H1 (cell line): ENCODE measurements at regions of chr1 and their contacts with region 1.

Region 1: GRCh38 chr1:200971955-200972711 is 51.4 kb downstream of the KIF21B start:
- DNase-seq: peak; percentile 27 to 90
- H3K4me3 ChIP-seq: no peak overlapping the region
- H3K27ac ChIP-seq: no peak overlapping the region
- H3K4me1 ChIP-seq: peaks cover 0 to 3% (median 0%) of the 10 kb centered on the region in 4 experiments; a peak in 1 of 7 replicates
- H3K27me3 ChIP-seq: no peaks in the 10 kb centered on the region
- CTCF ChIP-seq: peak; percentile 61 to 80 (median 68)
- EP300 ChIP-seq: no peak
- POLR2A ChIP-seq: no peak
- RAD21 ChIP-seq: peak; percentile 75 to 82

Region 2: DNA sequence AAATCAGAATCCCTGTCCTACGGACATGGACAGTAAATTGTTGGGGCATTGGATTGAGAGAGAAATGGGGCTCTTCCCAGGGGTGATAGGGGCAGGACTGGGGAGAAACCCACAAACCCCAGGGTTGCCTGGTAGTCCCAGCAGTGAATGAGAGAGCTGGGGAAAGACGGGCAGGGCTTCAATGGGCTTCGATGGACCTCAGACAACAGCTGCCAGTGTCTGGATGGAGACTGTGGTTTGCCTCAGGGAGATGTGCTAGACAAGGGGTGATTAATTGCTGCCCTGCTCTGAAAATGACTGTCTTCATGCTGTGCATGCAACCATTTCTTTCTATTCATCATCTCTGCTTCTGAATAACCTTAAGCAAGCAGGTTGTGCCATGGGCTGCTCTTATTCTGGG is 91.9 kb before region 1 on chr1:
- CTCF ChIA-PET with region 1: no interaction called
- POLR2A ChIA-PET with region 1: no interaction called
- DNase-seq: peak in 1 of 2 experiments; percentile 37
- H3K4me3 ChIP-seq: no peak overlapping the region
- H3K27ac ChIP-seq: no peak overlapping the region
- H3K4me1 ChIP-seq: peaks cover 0 to 6% (median 5%) of the 10 kb centered on the region in 4 experiments; a peak in 4 of 7 replicates
- H3K27me3 ChIP-seq: no peaks in the 10 kb centered on the region
- CTCF ChIP-seq: no peak
- EP300 ChIP-seq: no peak
- POLR2A ChIP-seq: no peak
- RAD21 ChIP-seq: no peak

Region 3: DNA sequence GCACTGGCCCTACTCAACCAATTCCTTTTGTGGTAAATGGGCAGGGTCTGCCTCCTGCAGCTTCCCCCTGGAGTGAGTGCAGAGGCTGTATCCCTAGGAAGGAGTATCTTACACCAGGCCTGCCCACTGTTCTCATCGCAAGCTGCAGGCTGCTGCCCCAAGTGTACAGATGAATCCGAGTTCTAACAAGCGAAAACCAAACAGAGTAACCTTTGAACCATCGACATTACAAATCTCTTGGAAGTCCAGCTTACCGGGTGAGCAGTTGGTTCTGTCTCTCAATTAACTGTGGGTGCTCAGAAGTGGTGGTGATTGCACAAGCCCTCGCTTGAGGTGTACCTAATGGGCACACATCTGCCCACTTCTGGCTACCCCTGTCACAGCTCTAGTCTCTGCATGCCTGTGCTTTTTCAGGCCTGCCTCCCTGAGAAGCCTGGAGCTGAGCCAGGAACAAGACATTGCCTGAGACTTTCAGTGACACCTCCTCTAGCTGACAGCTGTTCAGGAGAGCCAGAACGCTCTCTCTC is 54.8 kb before region 1 on chr1:
- CTCF ChIA-PET with region 1: interaction called, 14 read pairs
- POLR2A ChIA-PET with region 1: interaction called, 3 read pairs
- DNase-seq: no peak
- H3K4me3 ChIP-seq: no peak overlapping the region
- H3K27ac ChIP-seq: no peak overlapping the region
- H3K4me1 ChIP-seq: peaks cover 0 to 7% (median 5%) of the 10 kb centered on the region in 4 experiments; a peak in 3 of 7 replicates
- H3K27me3 ChIP-seq: no peaks in the 10 kb centered on the region
- CTCF ChIP-seq: no peak
- EP300 ChIP-seq: no peak
- POLR2A ChIP-seq: no peak
- RAD21 ChIP-seq: no peak

Region 4: DNA sequence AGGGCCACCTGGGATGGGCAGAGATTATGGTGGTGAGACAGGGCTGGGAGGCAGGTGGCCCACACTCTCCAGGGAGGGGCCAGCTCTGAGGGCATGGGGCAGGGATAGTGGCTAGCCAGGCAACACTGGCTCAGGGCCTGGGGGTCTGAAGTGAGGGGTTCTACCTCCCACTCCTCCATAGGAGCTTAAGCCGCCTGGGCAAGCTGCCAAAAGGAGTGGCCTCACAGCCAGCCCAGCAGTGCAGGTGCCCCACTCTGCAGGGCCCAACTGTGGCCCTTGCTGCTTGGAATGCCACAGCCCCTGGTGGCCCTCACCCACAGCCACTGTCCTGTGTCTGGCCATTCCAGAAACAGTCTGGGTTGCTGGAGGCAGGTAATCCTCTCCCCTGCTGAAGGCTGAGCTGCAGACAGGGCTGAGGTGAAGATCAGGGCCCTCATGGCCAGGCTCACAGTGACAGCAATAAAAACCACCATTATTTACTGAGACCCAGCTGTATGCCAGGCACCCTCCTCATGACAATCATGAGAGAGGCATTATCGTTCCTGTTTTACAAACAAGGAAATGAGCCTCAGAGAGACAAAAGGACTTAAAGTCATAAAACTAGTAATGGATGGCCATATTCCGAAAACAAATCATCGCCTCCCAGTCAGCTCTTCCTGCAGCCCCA is 20.4 kb after region 1 on chr1:
- CTCF ChIA-PET with region 1: interaction called, 146 read pairs
- POLR2A ChIA-PET with region 1: no interaction called
- DNase-seq: no peak
- H3K4me3 ChIP-seq: no peak overlapping the region
- H3K27ac ChIP-seq: no peak overlapping the region
- H3K4me1 ChIP-seq: no peaks in the 10 kb centered on the region
- H3K27me3 ChIP-seq: no peaks in the 10 kb centered on the region
- CTCF ChIP-seq: no peak
- EP300 ChIP-seq: no peak
- POLR2A ChIP-seq: no peak
- RAD21 ChIP-seq: no peak

Region 5: DNA sequence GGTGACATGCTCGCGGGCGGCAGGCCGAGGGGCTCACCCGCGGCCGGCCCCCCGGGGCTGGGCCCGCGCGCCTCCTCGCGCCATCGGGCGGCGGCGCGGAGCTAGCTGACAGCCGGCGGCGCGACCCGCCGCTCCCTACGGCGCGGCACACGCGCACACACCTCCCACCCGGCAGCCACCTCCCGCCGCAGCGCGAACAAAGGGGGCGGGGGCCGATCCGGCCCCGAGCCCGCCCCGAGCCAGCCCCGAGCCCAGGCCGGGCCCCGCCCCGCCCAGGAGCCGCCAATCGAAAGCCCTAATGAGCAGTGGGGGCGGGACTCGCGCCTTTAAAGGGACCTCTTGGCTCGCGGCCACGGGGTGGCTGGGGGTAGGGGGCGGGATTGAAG is 51.4 kb after region 1 on chr1 and contains the start of gene KIF21B:
- CTCF ChIA-PET with region 1: interaction called, 532 read pairs
- POLR2A ChIA-PET with region 1: no interaction called
- DNase-seq: peak in 1 of 2 experiments; percentile 92
- H3K4me3 ChIP-seq: peak within 1 kb of the TSS; percentile 64 to 84 (median 67)
- H3K27ac ChIP-seq: no peak within 1 kb of the TSS
- H3K4me1 ChIP-seq: peaks cover 22 to 49% (median 37%) of the 10 kb centered on the region in 4 experiments
- H3K27me3 ChIP-seq: peaks cover 0 to 5% (median under 1%) of the 10 kb centered on the region in 4 experiments; a peak in 2 of 7 replicates
- CTCF ChIP-seq: no peak
- EP300 ChIP-seq: no peak
- POLR2A ChIP-seq: no peak
- RAD21 ChIP-seq: no peak
- total RNA-seq, gene KIF21B: 26.5 and 27.2 TPM in 2 replicates

Region 6: DNA sequence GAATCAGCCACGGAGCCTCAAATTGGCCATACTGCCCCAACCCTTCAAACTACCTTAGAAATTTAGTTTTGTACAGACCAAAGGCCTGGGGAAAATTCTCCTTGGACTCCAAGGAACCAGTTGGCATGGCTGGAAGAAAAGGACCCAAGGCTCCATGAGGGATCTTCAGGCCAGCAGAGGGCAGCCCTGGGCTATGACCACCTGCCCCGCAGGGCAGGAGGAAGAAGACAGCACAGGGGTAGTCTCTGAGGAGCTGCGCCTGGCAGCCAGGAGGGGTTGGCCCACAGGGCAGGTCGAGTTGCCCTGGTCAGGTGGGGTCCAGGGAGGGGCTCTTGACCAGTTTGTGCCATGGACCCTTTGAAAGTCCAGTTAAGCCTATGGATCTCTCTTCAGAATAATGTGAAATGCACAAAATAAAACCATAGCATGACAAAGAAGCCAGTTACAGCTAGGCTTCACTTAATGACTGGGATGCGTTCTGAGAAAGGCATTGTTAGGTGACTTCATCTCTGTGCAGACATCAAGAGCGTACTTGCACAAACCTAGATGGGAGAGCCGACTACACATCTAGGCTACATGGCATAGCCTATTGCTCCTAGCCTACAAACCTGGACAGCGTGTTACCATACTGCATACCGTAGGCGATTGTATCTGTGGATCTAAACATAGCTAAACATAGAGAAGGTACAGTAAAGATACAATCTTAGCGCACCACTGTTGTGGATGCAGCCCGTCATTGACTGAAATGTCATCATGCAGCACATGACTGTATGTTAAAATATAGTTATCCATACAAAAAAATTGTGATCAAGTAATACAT is 114.0 kb after region 1 on chr1:
- CTCF ChIA-PET with region 1: interaction called, 19 read pairs
- POLR2A ChIA-PET with region 1: no interaction called
- DNase-seq: peak; percentile 25 to 81
- H3K4me3 ChIP-seq: no peak overlapping the region
- H3K27ac ChIP-seq: no peak overlapping the region
- H3K4me1 ChIP-seq: no peaks in the 10 kb centered on the region
- H3K27me3 ChIP-seq: no peaks in the 10 kb centered on the region
- CTCF ChIP-seq: peak; percentile 71 to 97 (median 86)
- EP300 ChIP-seq: no peak
- POLR2A ChIP-seq: no peak
- RAD21 ChIP-seq: peak; percentile 88 to 94

Region 7: DNA sequence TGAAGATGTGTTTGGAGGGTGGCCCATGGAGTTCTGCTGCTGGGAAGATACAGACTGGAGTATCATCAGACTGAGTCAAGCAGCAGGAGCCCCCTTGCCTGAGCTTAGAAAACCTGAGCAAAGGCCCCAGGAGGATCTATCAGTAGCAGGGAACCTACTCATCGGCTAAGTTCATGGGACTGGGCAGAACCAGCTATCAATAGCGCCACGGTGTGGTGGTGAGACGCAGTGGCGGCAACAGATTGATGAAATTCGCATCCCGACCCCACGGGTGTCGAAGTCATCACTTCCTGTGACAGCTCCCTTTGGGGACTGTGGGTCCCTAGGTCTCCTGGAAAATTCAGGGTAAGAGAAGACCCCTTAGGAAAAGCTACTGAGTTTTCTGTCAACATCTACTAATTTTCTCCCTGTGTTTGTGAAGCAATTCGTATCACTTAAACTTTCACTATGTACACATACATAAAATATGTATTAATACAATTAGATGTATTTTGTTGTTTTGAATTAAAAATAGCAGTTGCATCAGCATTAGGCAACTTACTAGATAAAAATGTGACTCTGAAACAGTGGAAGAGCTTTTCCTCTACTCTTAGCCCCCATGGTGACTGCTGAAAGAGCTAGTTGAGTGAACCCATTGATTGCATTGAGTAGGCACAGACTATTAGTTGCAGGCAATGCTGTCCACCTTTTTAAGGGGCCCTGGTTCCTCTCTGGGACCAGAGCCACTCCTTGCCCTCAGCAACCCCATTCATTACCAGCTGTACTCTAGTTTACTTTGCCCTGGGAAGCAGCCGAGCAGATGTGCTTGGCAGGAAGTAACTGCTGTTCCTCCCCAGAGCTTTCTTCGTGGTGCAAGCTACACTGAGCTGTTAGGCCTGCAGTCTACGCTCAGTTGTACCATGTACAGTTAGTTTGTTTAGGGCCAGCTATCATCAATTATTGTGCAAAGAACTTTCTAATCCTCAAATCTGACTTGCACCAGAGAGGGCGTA is 147.4 kb after region 1 on chr1:
- CTCF ChIA-PET with region 1: interaction called, 37 read pairs
- POLR2A ChIA-PET with region 1: no interaction called
- DNase-seq: peak in 1 of 2 experiments; percentile 81
- H3K4me3 ChIP-seq: no peak overlapping the region
- H3K27ac ChIP-seq: no peak overlapping the region
- H3K4me1 ChIP-seq: peaks cover 0 to 3% (median 0%) of the 10 kb centered on the region in 4 experiments; a peak in 1 of 7 replicates
- H3K27me3 ChIP-seq: peaks cover 9 to 22% (median 17%) of the 10 kb centered on the region in 4 experiments
- CTCF ChIP-seq: peak; percentile 91 to 98 (median 98)
- EP300 ChIP-seq: no peak
- POLR2A ChIP-seq: no peak
- RAD21 ChIP-seq: peak; percentile 80 to 86

Region 8: GRCh38 chr1:201268604-201269151 is 296.5 kb after region 1 on chr1:
- CTCF ChIA-PET with region 1: no interaction called
- POLR2A ChIA-PET with region 1: no interaction called
- DNase-seq: no peak
- H3K4me3 ChIP-seq: no peak overlapping the region
- H3K27ac ChIP-seq: no peak overlapping the region
- H3K4me1 ChIP-seq: peaks cover 0 to 4% (median 0%) of the 10 kb centered on the region in 4 experiments; a peak in 2 of 7 replicates
- H3K27me3 ChIP-seq: no peaks in the 10 kb centered on the region; a peak in 1 of 7 replicates
- CTCF ChIP-seq: no peak
- EP300 ChIP-seq: no peak
- POLR2A ChIP-seq: no peak
- RAD21 ChIP-seq: no peak